CD8-positive, alpha-beta T cell (primary cell): ENCODE measurements at regions of chr19 and their contacts with region 1.

Region 1: GRCh38 chr19:29941828-29942403 is at the start of gene URI1:
- DNase-seq: peak; percentile 87 to 98 (median 92)
- ATAC-seq: peak; percentile 92
- H3K4me3 ChIP-seq: peak within 1 kb of the TSS; percentile 81 to 85
- H3K4me3 Mint-ChIP-seq: peak within 1 kb of the TSS; percentile 97
- H3K27ac ChIP-seq: peak within 1 kb of the TSS; percentile 59 to 64
- H3K27ac Mint-ChIP-seq: peak within 1 kb of the TSS; percentile 94
- H3K4me1 ChIP-seq: peaks cover 40% of the 10 kb centered on the region
- H3K4me1 Mint-ChIP-seq: peaks cover 47% of the 10 kb centered on the region
- H3K27me3 ChIP-seq: peaks cover 0 to 2% of the 10 kb centered on the region in 2 experiments
- H3K27me3 Mint-ChIP-seq: peaks cover 3% of the 10 kb centered on the region
- CTCF ChIP-seq: no peak
- total RNA-seq, gene URI1: 51.3 to 56.4 TPM

Region 2: GRCh38 chr19:29212648-29213573 is 729.0 kb before region 1 on chr19 and contains the start of gene UQCRFS1:
- CTCF ChIA-PET with region 1: no interaction called
- POLR2A ChIA-PET with region 1: no interaction called
- intact Hi-C with region 1: loop called (anchors 2 kb)
- DNase-seq: peak; percentile 92 to 97 (median 95)
- ATAC-seq: peak; percentile 97
- H3K4me3 ChIP-seq: peak within 1 kb of the TSS; percentile 60 to 77
- H3K4me3 Mint-ChIP-seq: peak within 1 kb of the TSS; percentile 95
- H3K27ac ChIP-seq: peak within 1 kb of the TSS; percentile 80 to 89
- H3K27ac Mint-ChIP-seq: peak within 1 kb of the TSS; percentile 96
- H3K4me1 ChIP-seq: peaks cover 17% of the 10 kb centered on the region
- H3K4me1 Mint-ChIP-seq: peaks cover 46% of the 10 kb centered on the region
- H3K27me3 ChIP-seq: no peaks in the 10 kb centered on the region
- H3K27me3 Mint-ChIP-seq: peaks cover 6% of the 10 kb centered on the region
- CTCF ChIP-seq: no peak
- total RNA-seq, gene UQCRFS1: 31.5 to 31.8 TPM

Region 3: DNA sequence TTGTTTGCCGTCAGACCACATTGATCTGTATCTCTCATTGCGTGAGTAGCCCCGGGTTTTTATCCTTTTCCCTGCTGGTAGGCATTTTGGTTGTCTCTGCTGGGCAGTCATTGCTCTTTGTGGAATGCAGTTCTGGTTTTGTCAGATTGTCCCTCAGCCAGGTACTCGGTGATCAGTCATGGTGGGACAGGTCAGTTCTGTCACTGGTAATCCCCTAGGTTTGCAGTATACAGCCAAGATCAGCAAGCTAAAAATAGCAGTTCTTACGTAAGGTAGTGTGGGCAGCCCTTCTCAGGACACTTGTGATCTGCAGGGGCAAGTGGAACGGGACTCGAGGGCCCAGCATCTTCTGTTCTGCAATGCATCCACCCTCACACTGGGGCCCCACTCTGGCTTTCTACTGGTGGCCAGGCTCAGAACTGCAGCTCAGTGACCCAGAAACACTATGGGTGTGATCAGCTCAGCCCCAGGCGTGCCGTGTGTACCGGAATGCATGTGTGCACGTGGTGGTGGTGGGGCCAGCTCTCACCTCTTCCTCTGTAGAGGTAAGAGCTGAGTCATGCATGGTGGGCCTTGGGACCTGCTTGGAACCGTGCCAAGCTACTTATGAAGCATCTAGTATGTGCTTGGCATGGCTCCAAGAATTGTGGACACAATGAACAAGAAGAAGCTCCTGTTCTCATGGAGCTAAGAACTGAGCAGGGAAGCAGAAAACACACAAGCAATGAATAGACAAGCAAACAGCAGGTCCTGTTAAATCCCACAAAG is 270.3 kb before region 1 on chr19:
- CTCF ChIA-PET with region 1: no interaction called
- POLR2A ChIA-PET with region 1: no interaction called
- intact Hi-C with region 1: loop called in 1 of 2 experiments (anchors 5 kb)
- DNase-seq: peak; percentile 73 to 96 (median 91)
- ATAC-seq: peak; percentile 62
- H3K4me3 ChIP-seq: peak overlapping the region; percentile 16 to 26
- H3K4me3 Mint-ChIP-seq: peak overlapping the region; percentile 49
- H3K27ac ChIP-seq: peak overlapping the region; percentile 80 to 84
- H3K27ac Mint-ChIP-seq: peak overlapping the region; percentile 94
- H3K4me1 ChIP-seq: peaks cover 97% of the 10 kb centered on the region
- H3K4me1 Mint-ChIP-seq: peaks cover 90% of the 10 kb centered on the region
- H3K27me3 ChIP-seq: no peaks in the 10 kb centered on the region
- H3K27me3 Mint-ChIP-seq: no peaks in the 10 kb centered on the region
- CTCF ChIP-seq: peak; percentile 62

Region 4: DNA sequence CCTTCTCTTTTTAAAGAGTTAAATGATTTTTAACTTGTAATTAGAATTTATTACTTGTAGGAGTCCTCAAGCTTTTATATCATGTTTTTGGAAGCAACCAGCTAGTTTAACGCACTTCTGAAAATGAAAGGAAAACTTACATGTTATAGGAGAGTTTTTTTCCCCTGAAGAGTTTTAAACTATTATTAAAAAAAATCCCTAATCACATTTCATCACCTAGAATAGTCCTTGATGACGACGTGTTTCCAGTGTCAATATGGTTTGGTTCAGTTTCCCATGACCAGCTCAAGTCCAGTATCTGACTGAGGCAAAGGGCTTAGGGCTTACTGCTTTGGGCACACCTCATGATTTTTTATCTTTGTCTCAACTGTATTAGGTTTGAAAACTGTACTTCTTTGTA is 36.2 kb after region 1 on chr19:
- CTCF ChIA-PET with region 1: no interaction called
- POLR2A ChIA-PET with region 1: interaction called, 5 read pairs
- intact Hi-C with region 1: loop called in 1 of 2 experiments (anchors 5 kb)
- DNase-seq: no peak
- ATAC-seq: no peak
- H3K4me3 ChIP-seq: no peak overlapping the region
- H3K4me3 Mint-ChIP-seq: peak overlapping the region; percentile 3
- H3K27ac ChIP-seq: no peak overlapping the region
- H3K27ac Mint-ChIP-seq: no peak overlapping the region
- H3K4me1 ChIP-seq: peaks cover 31% of the 10 kb centered on the region
- H3K4me1 Mint-ChIP-seq: peaks cover 71% of the 10 kb centered on the region
- H3K27me3 ChIP-seq: no peaks in the 10 kb centered on the region
- H3K27me3 Mint-ChIP-seq: no peaks in the 10 kb centered on the region
- CTCF ChIP-seq: no peak

Region 5: DNA sequence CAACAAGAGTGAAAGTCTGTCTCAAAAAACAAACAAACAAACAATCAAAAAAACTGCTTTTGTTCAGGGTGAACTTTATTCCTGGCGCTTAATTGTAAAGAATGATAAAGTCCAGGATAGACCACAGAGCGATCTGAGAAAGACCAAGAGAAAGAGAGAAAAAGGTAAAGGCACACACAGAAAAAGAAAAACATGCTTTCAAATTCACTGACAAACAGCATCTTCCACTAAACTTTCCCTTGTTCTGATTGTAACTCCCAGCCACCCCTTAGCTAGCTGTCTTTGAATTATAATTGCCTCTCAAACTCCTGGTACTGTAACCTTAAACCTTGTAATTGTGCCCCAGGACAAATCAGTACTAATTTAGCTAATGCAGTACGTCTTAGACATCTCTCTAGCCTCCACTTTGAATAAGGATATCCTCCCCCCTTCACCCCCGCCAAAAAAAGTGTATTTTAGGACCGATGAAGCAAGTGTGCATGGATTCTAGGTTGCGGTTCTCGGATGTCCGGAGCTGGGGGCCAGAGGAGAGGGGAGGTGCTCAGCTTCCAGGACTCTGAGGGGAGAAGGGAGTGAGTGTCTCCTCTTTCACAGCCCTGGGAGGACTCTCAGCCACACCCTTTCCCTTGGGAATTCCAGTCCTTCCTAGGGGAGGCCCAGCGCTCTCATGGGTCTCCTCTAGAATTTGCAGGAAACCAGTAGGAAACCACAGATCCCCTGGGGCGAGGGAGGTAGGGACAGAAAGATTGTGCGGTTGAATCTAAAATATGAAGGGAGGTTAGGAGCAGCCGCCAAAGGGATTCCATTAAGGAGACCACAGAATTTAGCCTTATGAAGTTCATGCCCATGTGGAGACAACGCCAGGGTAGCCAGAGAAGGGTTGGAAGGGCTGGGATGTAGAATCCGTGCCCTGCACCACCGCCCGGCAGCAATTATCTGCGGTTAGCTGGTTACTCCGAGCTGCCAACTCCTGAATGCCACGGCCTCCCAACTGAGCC is 449.9 kb after region 1 on chr19:
- CTCF ChIA-PET with region 1: no interaction called
- POLR2A ChIA-PET with region 1: no interaction called
- intact Hi-C with region 1: no loop called
- DNase-seq: no peak
- ATAC-seq: no peak
- H3K4me3 ChIP-seq: no peak overlapping the region
- H3K4me3 Mint-ChIP-seq: no peak overlapping the region
- H3K27ac ChIP-seq: no peak overlapping the region
- H3K27ac Mint-ChIP-seq: no peak overlapping the region
- H3K4me1 ChIP-seq: no peaks in the 10 kb centered on the region
- H3K4me1 Mint-ChIP-seq: no peaks in the 10 kb centered on the region
- H3K27me3 ChIP-seq: no peaks in the 10 kb centered on the region
- H3K27me3 Mint-ChIP-seq: peaks cover 5% of the 10 kb centered on the region
- CTCF ChIP-seq: no peak